WTC11 (cell line): ENCODE measurements at regions of chr17 and their contacts with region 1.

Region 1: DNA sequence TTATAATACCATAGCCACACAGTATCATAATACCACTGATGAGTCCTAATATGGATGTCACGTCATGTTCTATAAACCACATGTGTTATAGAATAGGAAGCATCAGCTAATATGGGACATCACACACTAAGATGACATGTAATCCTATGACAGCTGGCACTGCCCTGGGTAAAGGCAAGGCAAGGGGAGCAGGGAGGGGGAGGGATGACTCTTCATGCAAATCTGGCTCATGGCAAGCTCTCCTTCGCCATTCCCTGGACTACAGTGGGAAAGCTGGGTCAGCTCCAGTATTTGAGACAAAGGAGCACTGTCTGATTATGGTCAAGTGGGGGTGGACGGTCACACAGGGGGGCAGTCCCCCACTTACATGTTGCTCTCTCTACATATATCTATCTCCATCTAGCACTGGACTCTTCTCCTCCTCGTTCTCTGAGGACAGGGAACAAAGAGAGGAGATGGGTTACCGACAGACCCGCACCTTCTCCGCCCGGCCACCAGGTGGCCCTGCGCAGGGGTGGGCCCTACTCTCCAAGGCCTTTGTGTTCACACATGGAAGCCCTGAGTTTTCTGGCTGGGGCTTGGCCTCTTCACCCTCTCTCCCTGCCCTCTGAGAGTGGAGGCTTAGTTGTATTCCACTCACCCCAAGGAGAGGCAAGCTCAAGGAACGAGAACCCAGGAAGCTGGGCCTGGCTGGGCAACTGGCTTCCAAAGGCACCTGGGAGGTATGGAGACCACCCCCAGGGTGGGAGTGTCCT is 23.4 kb upstream of the MPO start:
- DNase-seq: peak; percentile 74
- ATAC-seq: peak; percentile 76
- H3K4me3 Mint-ChIP-seq: no peak overlapping the region
- H3K27ac Mint-ChIP-seq: no peak overlapping the region
- H3K4me1 Mint-ChIP-seq: peaks cover 11% of the 10 kb centered on the region
- H3K27me3 Mint-ChIP-seq: no peaks in the 10 kb centered on the region; the same call in 1 of the 2 replicates
- CTCF ChIP-seq: peak; percentile 94

Region 2: DNA sequence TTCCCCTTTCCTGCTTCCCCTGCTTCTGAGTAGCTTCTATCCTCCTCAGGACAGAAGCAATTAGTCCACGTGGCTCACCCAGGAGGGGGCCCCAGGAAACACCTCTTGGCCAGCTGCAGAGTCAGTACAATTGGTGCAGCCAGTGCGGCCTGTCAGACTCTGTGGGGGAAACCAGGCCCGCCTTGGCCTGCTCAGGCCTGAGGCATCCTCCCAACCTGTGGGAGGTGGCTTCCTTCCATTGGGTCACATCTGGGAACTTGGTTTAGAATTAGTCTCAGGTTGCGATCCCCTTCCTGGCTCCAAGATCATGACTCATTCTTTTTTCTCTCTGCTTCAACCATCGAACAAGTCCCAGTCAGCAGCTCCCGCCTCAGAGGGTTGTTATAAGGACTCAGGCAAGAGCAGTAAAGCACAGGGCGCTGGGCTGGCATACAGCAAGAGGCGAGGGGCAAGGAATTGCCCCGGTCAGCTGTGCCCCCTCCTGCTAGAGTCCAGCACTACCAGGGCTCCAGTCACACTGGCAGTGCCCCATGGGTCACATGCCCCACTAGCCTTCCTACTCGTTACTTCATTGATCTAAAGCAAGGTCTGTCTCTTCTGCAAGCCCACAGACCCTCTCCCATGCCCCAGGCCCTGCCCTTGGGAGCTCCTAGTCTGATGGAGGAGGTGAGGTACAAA is 119.7 kb before region 1 on chr17:
- CTCF ChIA-PET with region 1: no interaction called
- POLR2A ChIA-PET with region 1: no interaction called
- DNase-seq: peak; percentile 40
- ATAC-seq: peak; percentile 97
- H3K4me3 Mint-ChIP-seq: no peak overlapping the region
- H3K27ac Mint-ChIP-seq: no peak overlapping the region
- H3K4me1 Mint-ChIP-seq: peaks cover 8% of the 10 kb centered on the region; the same call in 1 of the 2 replicates
- H3K27me3 Mint-ChIP-seq: peaks cover 14% of the 10 kb centered on the region
- CTCF ChIP-seq: no peak

Region 3: GRCh38 chr17:58277107-58277801 is 26.9 kb before region 1 on chr17:
- CTCF ChIA-PET with region 1: interaction called, 19 read pairs
- POLR2A ChIA-PET with region 1: no interaction called
- DNase-seq: no peak
- ATAC-seq: peak; percentile 48
- H3K4me3 Mint-ChIP-seq: no peak overlapping the region
- H3K27ac Mint-ChIP-seq: no peak overlapping the region
- H3K4me1 Mint-ChIP-seq: no peaks in the 10 kb centered on the region
- H3K27me3 Mint-ChIP-seq: peaks cover 16% of the 10 kb centered on the region
- CTCF ChIP-seq: peak; percentile 31; the same call in 1 of the 2 replicates

Region 4: GRCh38 chr17:58284320-58285067 is 19.7 kb before region 1 on chr17:
- CTCF ChIA-PET with region 1: interaction called, 27 read pairs
- POLR2A ChIA-PET with region 1: interaction called, 3 read pairs
- DNase-seq: peak; percentile 51
- ATAC-seq: peak; percentile 97
- H3K4me3 Mint-ChIP-seq: no peak overlapping the region
- H3K27ac Mint-ChIP-seq: 0 out of 2 replicates have a peak overlapping the region, but pooled peaks have one; percentile 17
- H3K4me1 Mint-ChIP-seq: peaks cover 20% of the 10 kb centered on the region
- H3K27me3 Mint-ChIP-seq: peaks cover 4% of the 10 kb centered on the region
- CTCF ChIP-seq: no peak

Region 5: GRCh38 chr17:58329035-58329809 is 25.1 kb after region 1 on chr17:
- CTCF ChIA-PET with region 1: interaction called, 23 read pairs
- POLR2A ChIA-PET with region 1: interaction called, 3 read pairs
- DNase-seq: peak; percentile 61
- ATAC-seq: peak; percentile 48
- H3K4me3 Mint-ChIP-seq: peak overlapping the region; percentile 41
- H3K27ac Mint-ChIP-seq: peak overlapping the region; percentile 44
- H3K4me1 Mint-ChIP-seq: peaks cover 57% of the 10 kb centered on the region
- H3K27me3 Mint-ChIP-seq: peaks cover 11% of the 10 kb centered on the region
- CTCF ChIP-seq: 0 out of 2 replicates have a peak, but pooled peaks have one; percentile 16

Region 6: DNA sequence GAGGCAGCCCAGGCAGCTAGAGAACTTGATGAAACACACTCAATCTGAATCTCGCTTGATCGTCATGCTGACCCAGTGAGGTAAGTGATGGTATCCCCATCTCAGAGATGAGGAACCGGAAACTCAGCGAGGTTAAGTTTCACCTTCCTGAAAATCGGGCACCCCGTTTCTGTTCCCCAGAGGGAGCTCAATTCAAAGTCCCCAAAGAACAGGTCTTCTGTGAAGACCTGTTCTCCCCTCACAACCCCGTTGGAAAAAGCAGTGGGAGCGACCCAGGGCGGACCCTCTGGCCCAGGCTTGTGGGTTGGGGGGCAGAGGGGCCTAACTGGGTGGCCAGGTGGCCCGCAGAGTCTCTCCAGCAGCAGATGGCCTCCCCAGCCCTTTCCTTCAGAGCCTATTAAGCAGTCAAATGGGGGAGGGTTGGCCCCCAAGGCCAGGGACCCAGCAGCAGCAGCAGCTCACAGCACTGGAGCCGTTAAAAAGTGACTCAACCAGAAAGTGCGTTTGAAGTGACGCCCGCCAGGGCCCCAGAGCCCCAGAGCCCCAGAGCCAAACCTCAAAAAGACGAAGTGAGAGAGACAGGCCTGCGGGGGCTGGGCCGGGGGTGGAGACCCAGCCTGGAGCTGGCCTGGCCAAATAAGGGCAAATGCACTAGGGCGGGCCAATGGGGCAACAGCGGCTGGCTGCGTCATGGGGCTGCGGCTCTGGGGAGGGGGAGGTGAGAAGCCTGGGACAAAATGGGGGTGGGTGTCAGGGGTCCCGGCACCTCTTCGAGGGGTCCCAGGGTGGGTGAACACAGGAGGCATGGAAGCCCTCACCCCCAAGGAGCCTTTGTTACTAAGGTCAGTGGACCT is 33.7 kb after region 1 on chr17:
- CTCF ChIA-PET with region 1: interaction called, 10 read pairs
- POLR2A ChIA-PET with region 1: interaction called, 3 read pairs
- DNase-seq: peak; percentile 84
- ATAC-seq: peak; percentile 84
- H3K4me3 Mint-ChIP-seq: 0 out of 2 replicates have a peak overlapping the region, but pooled peaks have one; percentile 14
- H3K27ac Mint-ChIP-seq: peak overlapping the region; percentile 88
- H3K4me1 Mint-ChIP-seq: peaks cover 45% of the 10 kb centered on the region
- H3K27me3 Mint-ChIP-seq: no peaks in the 10 kb centered on the region; the same call in 1 of the 2 replicates
- CTCF ChIP-seq: no peak

Region 7: DNA sequence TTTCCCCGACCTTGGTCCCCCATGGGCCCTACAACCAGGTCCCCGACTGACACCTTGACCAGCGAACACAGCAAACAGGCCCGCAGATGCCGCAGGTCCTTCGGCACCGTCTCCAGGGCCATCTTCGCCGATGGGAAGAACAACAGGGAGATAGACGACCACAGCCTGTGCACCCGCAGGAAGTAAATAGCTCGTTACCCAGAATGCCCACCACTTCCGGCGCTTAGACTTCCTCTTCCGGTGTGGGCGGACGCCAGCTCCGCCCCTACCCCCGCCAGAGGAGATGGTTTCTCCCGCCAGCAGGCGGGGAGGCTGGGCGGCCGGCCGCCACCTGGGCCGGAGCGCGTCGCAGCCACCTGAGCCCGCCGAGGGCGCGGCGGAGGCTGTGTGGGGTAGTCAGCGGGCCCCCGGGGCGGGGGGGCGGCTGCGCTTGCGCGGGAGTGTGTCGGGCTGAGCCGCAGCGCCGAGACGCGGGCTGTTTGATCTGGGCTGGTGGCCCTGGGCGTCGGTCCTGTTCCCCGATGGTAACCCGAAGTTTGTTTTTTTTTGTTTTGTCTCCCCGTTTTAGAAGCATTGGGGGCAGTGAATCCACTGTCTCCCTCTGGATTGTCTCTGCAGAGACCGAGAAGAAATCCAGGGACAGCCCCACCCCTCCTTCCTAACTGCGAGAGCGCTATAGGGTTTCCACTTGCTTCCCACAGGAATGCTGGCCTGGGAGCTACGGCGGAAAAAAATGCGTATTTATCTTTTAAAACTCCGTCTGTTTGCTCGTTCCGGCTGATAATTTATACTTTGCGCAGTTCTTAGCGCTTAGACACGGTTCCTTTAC is 48.1 kb after region 1 on chr17 and contains the start of gene SUPT4H1:
- CTCF ChIA-PET with region 1: interaction called, 11 read pairs
- POLR2A ChIA-PET with region 1: no interaction called
- DNase-seq: peak; percentile 89
- ATAC-seq: peak; percentile 88
- H3K4me3 Mint-ChIP-seq: peak within 1 kb of the TSS; percentile 100
- H3K27ac Mint-ChIP-seq: peak within 1 kb of the TSS; percentile 99
- H3K4me1 Mint-ChIP-seq: peaks cover 19% of the 10 kb centered on the region
- H3K27me3 Mint-ChIP-seq: no peaks in the 10 kb centered on the region; the same call in 1 of the 2 replicates
- CTCF ChIP-seq: no peak
- total RNA-seq, gene SUPT4H1: 85.5 to 91.1 TPM (median 89.3 TPM) in 3 replicates

Region 8: GRCh38 chr17:58369214-58370031 is 65.3 kb after region 1 on chr17:
- CTCF ChIA-PET with region 1: no interaction called
- POLR2A ChIA-PET with region 1: no interaction called
- DNase-seq: no peak
- ATAC-seq: no peak
- H3K4me3 Mint-ChIP-seq: no peak overlapping the region
- H3K27ac Mint-ChIP-seq: no peak overlapping the region
- H3K4me1 Mint-ChIP-seq: peaks cover 3% of the 10 kb centered on the region; the same call in 1 of the 2 replicates
- H3K27me3 Mint-ChIP-seq: no peaks in the 10 kb centered on the region
- CTCF ChIP-seq: no peak